GM12878 (cell line): ENCODE measurements at regions of chr3 and their contacts with region 1.

Region 1: DNA sequence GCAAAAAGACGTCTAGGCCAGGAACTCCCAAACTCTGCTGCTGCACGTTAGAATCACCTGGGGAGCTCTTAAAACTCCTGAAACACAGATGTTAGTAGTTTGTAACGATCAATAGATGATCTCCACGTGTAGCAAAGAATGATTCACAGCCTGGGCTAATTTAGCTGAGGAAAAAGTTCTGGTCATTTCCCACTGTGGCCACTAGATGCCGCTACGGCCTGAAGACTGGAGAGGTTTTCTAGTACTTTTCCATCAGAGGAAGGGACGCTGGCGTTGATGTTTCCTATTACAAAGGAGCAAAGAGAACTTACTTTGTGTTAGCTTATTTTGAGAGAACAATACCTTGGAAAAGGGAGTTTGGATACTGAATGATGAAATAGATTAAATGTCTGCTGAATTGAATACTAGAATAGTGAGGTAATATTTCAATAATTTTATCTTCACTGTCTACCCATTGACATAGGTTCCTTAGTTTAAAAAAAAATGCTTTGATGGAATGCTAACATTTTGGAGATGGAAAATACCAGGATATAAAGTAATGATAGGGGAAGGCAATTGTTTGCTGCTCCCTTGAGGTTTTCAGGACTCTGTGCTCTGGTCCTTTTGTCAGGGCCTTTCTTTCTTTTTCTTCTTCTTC is 159.1 kb downstream of the P3H2 start:
- DNase-seq: peak; percentile 19
- ATAC-seq: peak; percentile 82
- H3K4me3 ChIP-seq: no peak overlapping the region
- H3K27ac ChIP-seq: no peak overlapping the region
- H3K4me1 ChIP-seq: no peaks in the 10 kb centered on the region
- H3K27me3 ChIP-seq: no peaks in the 10 kb centered on the region
- CTCF ChIP-seq: peak; percentile 86 to 92 (median 92); a peak in 5 of 6 replicates
- EP300 ChIP-seq: no peak
- POLR2A ChIP-seq: no peak
- RAD21 ChIP-seq: peak; percentile 94

Region 2: GRCh38 chr3:189270248-189270832 is 691.3 kb before region 1 on chr3:
- CTCF ChIA-PET with region 1: interaction called, 30 read pairs
- POLR2A ChIA-PET with region 1: no interaction called
- RAD21 ChIA-PET with region 1: interaction called, 8 read pairs
- SMC1A ChIA-PET with region 1: interaction called, 4 read pairs
- in situ Hi-C with region 1: loop called (anchors 5 kb)
- intact Hi-C with region 1: no loop called
- DNase-seq: no peak
- ATAC-seq: peak; percentile 93
- H3K4me3 ChIP-seq: no peak overlapping the region
- H3K27ac ChIP-seq: no peak overlapping the region
- H3K4me1 ChIP-seq: no peaks in the 10 kb centered on the region; the same call in 1 of the 2 replicates
- H3K27me3 ChIP-seq: no peaks in the 10 kb centered on the region; a peak in 1 of 4 replicates
- CTCF ChIP-seq: peak; percentile 72 to 77 (median 75)
- EP300 ChIP-seq: no peak
- POLR2A ChIP-seq: no peak
- RAD21 ChIP-seq: peak; percentile 96

Region 3: DNA sequence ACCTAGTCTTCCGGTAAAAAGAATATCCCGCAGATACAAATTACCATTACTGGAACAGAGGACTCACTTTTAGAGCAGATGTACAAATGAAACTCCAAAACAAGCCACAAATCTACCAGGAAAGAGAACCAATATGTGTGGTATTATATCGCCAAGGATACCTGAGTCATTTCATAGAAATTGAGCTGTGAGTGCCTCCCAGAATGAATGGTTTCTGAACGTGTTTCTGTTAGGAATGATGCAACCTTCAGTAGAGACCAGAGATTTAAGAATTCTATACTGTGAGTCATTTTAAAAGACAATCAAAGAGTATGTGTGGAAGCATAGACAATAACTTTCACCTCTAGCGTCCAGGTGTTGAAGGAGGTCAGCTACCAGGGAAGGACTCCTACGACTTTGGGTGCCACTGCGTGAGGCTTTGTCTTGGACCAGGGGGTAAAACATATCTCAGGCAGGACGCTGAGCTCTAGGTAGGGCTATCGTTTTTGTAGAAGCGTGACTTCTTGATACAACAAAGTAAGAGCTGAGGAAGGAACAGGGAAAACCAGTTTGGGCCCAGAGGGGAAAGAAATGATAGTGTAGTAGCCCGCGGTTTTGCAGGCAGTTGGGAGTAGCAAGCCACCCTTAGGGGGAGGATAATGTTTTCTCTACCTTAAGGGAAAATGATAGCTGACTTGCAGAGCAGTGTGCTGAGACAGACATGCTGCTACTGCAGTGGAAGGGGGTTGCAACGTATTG is 120.0 kb before region 1 on chr3:
- CTCF ChIA-PET with region 1: no interaction called
- POLR2A ChIA-PET with region 1: no interaction called
- RAD21 ChIA-PET with region 1: no interaction called
- SMC1A ChIA-PET with region 1: no interaction called
- in situ Hi-C with region 1: no loop called
- intact Hi-C with region 1: no loop called
- DNase-seq: no peak
- ATAC-seq: peak; percentile 54
- H3K4me3 ChIP-seq: no peak overlapping the region
- H3K27ac ChIP-seq: no peak overlapping the region
- H3K4me1 ChIP-seq: no peaks in the 10 kb centered on the region
- H3K27me3 ChIP-seq: no peaks in the 10 kb centered on the region
- CTCF ChIP-seq: no peak
- EP300 ChIP-seq: no peak; a peak in 1 of 4 replicates
- POLR2A ChIP-seq: no peak
- RAD21 ChIP-seq: no peak

Region 4: GRCh38 chr3:189974359-189974758 is 12.7 kb after region 1 on chr3:
- CTCF ChIA-PET with region 1: interaction called, 48 read pairs
- POLR2A ChIA-PET with region 1: no interaction called
- RAD21 ChIA-PET with region 1: interaction called, 4 read pairs
- SMC1A ChIA-PET with region 1: interaction called, 16 read pairs
- in situ Hi-C with region 1: no loop called
- intact Hi-C with region 1: no loop called
- DNase-seq: no peak
- ATAC-seq: no peak
- H3K4me3 ChIP-seq: no peak overlapping the region
- H3K27ac ChIP-seq: no peak overlapping the region
- H3K4me1 ChIP-seq: no peaks in the 10 kb centered on the region
- H3K27me3 ChIP-seq: peaks cover 0 to 2% of the 10 kb centered on the region in 2 experiments; a peak in 1 of 4 replicates
- CTCF ChIP-seq: no peak
- EP300 ChIP-seq: no peak
- POLR2A ChIP-seq: no peak
- RAD21 ChIP-seq: no peak

Region 5: GRCh38 chr3:190217081-190217480 is 255.4 kb after region 1 on chr3:
- CTCF ChIA-PET with region 1: interaction called, 31 read pairs
- POLR2A ChIA-PET with region 1: no interaction called
- RAD21 ChIA-PET with region 1: interaction called, 5 read pairs
- SMC1A ChIA-PET with region 1: interaction called, 5 read pairs
- in situ Hi-C with region 1: no loop called
- intact Hi-C with region 1: no loop called
- DNase-seq: no peak
- ATAC-seq: no peak
- H3K4me3 ChIP-seq: no peak overlapping the region
- H3K27ac ChIP-seq: no peak overlapping the region
- H3K4me1 ChIP-seq: no peaks in the 10 kb centered on the region
- H3K27me3 ChIP-seq: no peaks in the 10 kb centered on the region
- CTCF ChIP-seq: no peak
- EP300 ChIP-seq: no peak
- POLR2A ChIP-seq: no peak
- RAD21 ChIP-seq: no peak

Region 6: DNA sequence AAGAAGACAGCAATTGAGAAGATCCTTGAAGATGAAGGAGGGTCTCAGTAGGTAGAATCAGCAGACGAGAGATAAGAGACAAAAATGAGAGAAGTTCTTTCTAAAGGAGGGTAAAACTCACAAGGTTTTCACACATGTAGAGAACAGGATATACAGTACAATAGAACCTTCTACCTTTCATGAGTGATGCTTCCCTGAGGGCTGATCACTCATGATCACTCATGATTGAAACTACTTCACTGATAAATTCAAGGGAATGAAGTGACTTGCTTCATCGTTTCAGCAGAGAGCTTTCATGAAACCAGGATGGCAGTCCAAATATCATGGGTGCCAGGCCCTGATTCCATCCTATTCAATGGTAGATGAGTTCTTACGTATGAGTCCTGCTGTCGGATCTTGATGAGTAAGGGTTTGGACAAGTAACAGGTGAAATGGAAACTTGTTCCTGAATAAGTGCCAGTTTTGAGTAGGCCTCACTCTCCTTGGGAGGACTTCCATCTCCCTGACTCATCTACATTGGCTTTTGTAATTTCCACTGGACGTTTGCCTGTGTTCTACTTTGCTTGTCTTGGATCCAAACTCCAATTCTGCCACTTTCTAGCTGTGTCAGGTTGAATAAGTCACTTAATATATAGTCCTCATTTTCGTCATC is 416.7 kb after region 1 on chr3:
- CTCF ChIA-PET with region 1: interaction called, 64 read pairs
- POLR2A ChIA-PET with region 1: no interaction called
- RAD21 ChIA-PET with region 1: interaction called, 31 read pairs
- SMC1A ChIA-PET with region 1: interaction called, 44 read pairs
- in situ Hi-C with region 1: loop called (anchors 10 kb)
- intact Hi-C with region 1: no loop called
- DNase-seq: no peak
- ATAC-seq: no peak
- H3K4me3 ChIP-seq: no peak overlapping the region
- H3K27ac ChIP-seq: no peak overlapping the region
- H3K4me1 ChIP-seq: no peaks in the 10 kb centered on the region
- H3K27me3 ChIP-seq: no peaks in the 10 kb centered on the region; a peak in 1 of 4 replicates
- CTCF ChIP-seq: no peak
- EP300 ChIP-seq: no peak
- POLR2A ChIP-seq: no peak
- RAD21 ChIP-seq: no peak

Region 7: DNA sequence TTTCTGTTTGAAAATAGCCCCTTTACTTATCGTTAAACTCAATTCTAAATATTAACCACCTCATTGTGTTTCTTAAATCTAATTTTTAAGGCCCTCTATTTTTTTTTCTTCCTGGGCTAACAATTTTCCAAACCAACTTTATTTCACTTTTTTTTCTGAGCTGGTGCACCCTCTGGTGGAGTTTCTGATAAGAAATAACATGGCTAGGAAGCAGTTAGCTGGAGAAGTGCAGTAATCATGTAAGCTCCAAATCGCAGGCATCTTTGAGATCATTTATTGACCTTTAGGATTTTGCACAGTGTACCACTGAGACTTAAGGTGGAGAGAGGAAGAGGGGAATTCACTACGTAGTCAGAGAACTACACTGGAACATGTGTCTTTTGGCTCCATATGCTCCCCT is 481.6 kb after region 1 on chr3:
- CTCF ChIA-PET with region 1: interaction called, 25 read pairs
- POLR2A ChIA-PET with region 1: no interaction called
- RAD21 ChIA-PET with region 1: interaction called, 8 read pairs
- SMC1A ChIA-PET with region 1: interaction called, 28 read pairs
- in situ Hi-C with region 1: no loop called
- intact Hi-C with region 1: loop called (anchors 5 kb)
- DNase-seq: no peak
- ATAC-seq: no peak
- H3K4me3 ChIP-seq: no peak overlapping the region
- H3K27ac ChIP-seq: no peak overlapping the region
- H3K4me1 ChIP-seq: no peaks in the 10 kb centered on the region
- H3K27me3 ChIP-seq: no peaks in the 10 kb centered on the region
- CTCF ChIP-seq: peak in 1 of 3 experiments; percentile 6; a peak in 1 of 6 replicates
- EP300 ChIP-seq: no peak
- POLR2A ChIP-seq: no peak
- RAD21 ChIP-seq: no peak